ENCODE measurements at regions of chr20 and their contacts with region 1.

Region 1: GRCh38 chr20:42041072-42041471 is 422.9 kb upstream of the CHD6 start:
- DNase-seq: no peak
- H3K4me3 ChIP-seq: no peak overlapping the region
- H3K27ac ChIP-seq: no peak overlapping the region
- H3K4me1 ChIP-seq: peaks cover 0 to 13% of the 10 kb centered on the region in 2 experiments; a peak in 1 of 4 replicates
- H3K27me3 ChIP-seq: no peaks in the 10 kb centered on the region
- CTCF ChIP-seq: no peak
- EP300 ChIP-seq: no peak
- RAD21 ChIP-seq: peak; percentile 61

Region 2: DNA sequence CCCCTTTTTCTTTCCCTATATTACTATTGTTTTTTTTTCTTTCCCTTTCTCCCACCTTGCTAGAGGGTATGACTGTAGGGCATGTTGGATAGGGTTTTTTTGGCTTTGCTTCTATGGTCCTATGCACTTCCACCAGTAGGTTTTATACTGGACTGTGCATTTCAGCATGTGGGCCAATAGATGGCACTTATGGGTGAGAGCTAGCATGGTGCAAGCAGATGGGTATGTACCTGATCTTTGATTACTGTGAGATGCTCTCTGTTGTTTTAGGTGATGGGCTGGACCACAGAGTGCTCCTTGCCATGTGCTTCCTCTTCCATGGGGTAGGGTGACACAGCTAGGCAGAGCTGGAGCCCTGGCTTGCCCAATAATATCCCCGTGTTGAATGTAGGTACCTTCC is 294.4 kb before region 1 on chr20:
- CTCF ChIA-PET with region 1: no interaction called
- POLR2A ChIA-PET with region 1: no interaction called
- DNase-seq: no peak
- H3K4me3 ChIP-seq: no peak overlapping the region
- H3K27ac ChIP-seq: no peak overlapping the region
- H3K4me1 ChIP-seq: peaks cover 0 to 26% of the 10 kb centered on the region in 2 experiments; a peak in 1 of 4 replicates
- H3K27me3 ChIP-seq: no peaks in the 10 kb centered on the region
- CTCF ChIP-seq: no peak
- EP300 ChIP-seq: no peak
- RAD21 ChIP-seq: no peak; the same call in 1 of the 2 replicates

Region 3: DNA sequence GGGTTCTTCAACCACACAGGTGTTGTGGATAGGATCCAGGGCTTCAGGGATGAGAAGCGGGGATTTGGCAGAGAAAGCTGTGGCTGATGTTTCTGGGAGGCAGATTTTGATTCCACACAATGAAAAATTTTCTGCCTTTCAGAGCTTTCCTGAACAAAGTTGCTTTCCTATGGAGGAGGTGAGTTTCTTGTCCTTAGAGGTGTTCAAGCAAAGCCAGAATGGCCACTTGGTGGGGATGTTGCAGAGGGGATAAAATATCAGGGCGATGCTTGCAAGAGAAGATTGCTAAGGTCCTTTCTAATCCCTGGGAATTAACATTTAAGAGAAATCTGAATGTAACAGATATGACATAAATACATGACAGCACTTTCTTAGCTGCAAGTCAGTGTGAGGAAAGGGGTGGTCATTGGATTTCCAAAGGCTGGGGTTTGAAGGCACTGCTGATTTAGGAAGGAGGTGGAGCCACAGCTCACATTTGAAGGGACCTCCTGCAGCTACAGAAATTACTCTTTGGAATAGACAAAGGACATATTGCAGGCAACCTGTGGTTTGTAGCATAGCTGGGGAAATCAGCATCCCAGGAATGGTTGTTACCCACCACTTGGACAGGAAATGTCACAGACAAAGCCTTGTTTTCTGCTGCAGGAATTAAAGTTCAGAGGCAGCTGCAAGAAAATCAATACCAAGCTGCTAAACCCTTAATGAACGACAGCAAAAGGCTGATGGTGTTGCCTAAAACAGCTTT is 151.8 kb before region 1 on chr20:
- CTCF ChIA-PET with region 1: interaction called, 12 read pairs
- POLR2A ChIA-PET with region 1: no interaction called
- DNase-seq: peak; percentile 47
- H3K4me3 ChIP-seq: no peak overlapping the region
- H3K27ac ChIP-seq: no peak overlapping the region
- H3K4me1 ChIP-seq: no peaks in the 10 kb centered on the region
- H3K27me3 ChIP-seq: no peaks in the 10 kb centered on the region
- CTCF ChIP-seq: no peak
- EP300 ChIP-seq: no peak
- RAD21 ChIP-seq: peak; percentile 77

Region 4: DNA sequence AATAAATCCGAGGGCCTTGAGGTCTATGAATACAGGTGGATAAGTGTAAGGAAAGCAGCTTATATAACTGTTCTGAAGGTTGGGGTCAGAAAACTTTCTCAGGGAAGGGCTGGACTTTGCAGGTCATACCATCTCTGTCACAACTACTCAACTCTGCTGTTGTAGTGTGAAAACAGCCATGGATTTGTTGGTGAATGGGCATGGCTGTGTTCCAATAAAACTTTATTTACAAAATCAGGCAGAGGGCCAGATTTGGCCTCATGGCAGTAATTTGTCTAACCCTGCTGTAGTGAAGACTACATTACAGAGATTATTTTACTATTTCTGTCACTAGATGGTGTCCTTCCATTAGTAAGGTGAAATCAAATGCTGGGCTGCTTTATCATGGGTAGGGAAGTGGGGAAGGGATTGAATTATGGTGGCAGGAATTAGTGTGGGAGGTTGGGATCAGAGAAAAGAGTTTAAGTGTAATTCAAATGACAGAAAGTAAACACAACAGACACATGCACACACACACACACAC is 13.3 kb before region 1 on chr20:
- CTCF ChIA-PET with region 1: interaction called, 25 read pairs
- POLR2A ChIA-PET with region 1: no interaction called
- DNase-seq: peak; percentile 38
- H3K4me3 ChIP-seq: no peak overlapping the region
- H3K27ac ChIP-seq: no peak overlapping the region
- H3K4me1 ChIP-seq: no peaks in the 10 kb centered on the region; a peak in 1 of 4 replicates
- H3K27me3 ChIP-seq: no peaks in the 10 kb centered on the region
- CTCF ChIP-seq: no peak
- EP300 ChIP-seq: no peak
- RAD21 ChIP-seq: peak; percentile 80

Region 5: DNA sequence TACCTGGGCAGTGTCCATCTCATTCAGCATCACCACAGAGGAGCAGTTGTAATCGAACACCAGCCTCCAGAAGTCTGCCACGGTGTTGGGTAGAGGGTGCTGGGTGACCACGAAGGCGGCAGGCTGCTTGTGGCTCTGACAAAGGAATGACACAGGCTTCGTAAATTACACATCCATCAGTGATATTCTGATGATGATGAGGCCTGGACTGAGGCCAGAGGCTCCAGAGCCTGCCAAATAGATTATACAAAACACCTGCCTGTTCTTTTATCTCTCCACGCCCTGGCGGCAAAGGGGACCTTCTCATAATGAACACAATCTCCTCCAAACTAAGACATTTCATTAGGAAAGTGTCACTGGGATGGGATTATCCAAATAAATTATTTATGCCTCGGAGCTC is 57.3 kb after region 1 on chr20:
- CTCF ChIA-PET with region 1: no interaction called
- POLR2A ChIA-PET with region 1: no interaction called
- DNase-seq: no peak
- H3K4me3 ChIP-seq: no peak overlapping the region
- H3K27ac ChIP-seq: peak overlapping the region in 1 of 2 experiments; percentile 99; a peak in 2 of 4 replicates
- H3K4me1 ChIP-seq: peaks cover 0 to 49% of the 10 kb centered on the region in 2 experiments; a peak in 1 of 4 replicates
- H3K27me3 ChIP-seq: no peaks in the 10 kb centered on the region
- CTCF ChIP-seq: no peak
- EP300 ChIP-seq: no peak; a peak in 1 of 4 replicates
- RAD21 ChIP-seq: no peak

Measured in SK-N-SH (cell line).